Activated CD4-positive, alpha-beta T cell treated with anti-CD3 and anti-CD28 coated beads for 36 hours (primary cell): ENCODE measurements at regions of chr3 and their contacts with region 1.

Region 1: DNA sequence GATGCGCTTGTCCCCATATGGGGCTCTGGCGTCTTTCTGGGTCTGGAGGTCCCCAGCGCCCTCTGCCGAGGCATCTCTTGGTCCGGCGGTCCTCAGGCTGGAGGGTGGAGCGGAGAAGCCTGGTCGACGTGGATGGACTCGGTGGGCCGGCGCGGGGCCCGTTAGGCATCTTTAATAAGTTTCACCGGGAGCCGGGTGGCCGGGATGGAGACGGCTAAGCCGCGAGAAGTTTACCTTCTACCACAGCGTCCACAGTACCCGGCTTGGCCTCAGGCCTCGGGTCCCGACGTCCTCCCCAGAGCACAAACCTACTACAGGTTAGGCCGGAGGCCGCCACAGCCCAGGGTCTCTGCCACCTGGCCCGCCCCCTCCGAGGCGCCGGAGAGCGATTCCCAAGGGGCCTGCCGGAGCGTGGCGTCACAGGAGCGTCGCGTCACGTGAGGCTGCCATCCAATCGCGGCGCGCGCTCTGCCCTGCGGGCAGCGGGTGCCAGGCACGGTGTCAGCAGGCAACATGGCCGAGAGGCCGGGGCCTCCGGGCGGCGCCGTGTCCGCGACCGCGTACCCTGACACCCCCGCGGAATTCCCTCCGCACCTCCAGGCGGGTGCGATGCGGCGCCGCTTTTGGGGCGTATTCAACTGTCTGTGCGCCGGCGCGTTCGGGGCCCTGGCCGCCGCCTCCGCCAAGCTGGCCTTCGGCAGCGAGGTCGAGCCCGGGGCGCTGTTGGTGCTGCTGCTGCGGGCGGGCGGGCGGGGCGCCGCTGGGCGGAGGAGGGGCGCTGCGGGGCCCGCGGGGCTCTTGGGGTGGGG is at the start of gene TMEM42:
- DNase-seq: peak; percentile 91
- ATAC-seq: peak; percentile 96
- H3K4me3 Mint-ChIP-seq: peak within 1 kb of the TSS; percentile 78
- H3K27ac Mint-ChIP-seq: peak within 1 kb of the TSS; percentile 73
- H3K4me1 Mint-ChIP-seq: peaks cover 34% of the 10 kb centered on the region
- H3K27me3 Mint-ChIP-seq: no peaks in the 10 kb centered on the region
- total RNA-seq, gene TMEM42: 7.6 to 10.9 TPM

Region 2: DNA sequence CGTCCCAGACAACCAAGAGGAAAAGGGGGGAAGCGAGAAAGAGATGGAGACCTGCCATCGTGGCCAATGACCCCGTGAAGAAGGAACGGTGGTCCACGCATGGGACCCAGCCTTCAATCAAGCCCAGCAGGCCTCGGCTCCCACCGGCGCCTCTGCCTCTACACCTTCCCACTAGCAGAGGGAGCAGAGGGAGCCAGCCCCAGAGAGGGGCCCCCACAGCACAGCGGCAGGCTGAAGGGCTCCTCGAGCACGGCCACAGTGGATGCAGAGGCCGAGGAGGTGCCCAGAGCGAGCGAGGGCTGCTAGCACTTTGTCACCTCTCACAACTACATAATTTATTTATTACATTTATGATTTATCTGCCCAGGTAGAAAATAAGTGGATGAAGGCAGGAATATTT is 688.4 kb before region 1 on chr3:
- CTCF ChIA-PET with region 1: no interaction called
- POLR2A ChIA-PET with region 1: no interaction called
- intact Hi-C with region 1: no loop called
- DNase-seq: no peak
- ATAC-seq: no peak
- H3K4me3 Mint-ChIP-seq: no peak overlapping the region
- H3K27ac Mint-ChIP-seq: no peak overlapping the region
- H3K4me1 Mint-ChIP-seq: no peaks in the 10 kb centered on the region
- H3K27me3 Mint-ChIP-seq: peaks cover 26% of the 10 kb centered on the region

Region 3: DNA sequence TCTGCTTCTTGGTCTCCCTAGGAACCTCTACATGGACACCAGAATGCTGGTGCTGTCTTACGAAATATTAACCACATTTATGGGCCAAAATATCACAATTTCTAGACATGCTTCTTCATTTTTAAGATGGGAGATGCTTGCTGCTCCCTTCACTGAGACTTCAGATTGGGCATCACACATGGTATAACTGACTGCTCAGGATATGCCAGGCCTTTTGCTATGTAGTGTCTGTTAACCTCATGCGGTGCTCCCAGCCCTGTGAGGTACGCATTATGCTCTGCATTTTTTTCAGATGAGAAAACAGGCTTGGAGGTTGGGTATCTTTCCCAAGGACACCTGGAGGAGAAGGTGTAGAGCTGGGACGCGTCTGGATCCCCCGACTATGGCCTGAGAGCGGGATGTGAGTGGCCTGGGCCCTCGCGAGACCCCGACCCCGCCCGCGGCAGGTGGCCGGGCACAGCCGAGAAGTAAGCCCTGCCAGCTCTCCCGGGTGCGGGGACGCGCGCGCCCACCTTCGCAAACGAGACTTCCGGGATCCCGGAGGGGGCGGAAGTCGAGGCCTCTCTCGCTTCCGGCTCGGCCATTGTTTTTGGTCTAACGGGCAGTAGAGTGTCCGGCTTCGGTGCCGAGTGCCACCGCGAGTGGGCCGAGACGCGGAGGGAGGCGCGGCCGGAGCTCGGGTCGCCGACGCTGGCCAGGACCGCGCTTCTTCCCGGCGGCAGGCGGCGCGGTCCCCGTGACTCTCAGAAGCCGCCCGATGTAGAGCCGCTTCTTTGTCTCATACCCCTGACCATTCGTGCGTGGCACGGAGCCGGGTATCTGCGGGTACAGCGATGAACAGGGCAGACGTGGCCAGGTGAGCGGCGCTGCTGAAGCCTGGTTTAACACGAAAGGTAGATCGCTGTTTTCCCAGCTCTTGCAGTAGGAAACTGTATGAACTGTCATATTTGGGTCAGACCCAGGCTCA is 306.7 kb before region 1 on chr3 and contains the start of gene ZKSCAN7:
- CTCF ChIA-PET with region 1: no interaction called
- POLR2A ChIA-PET with region 1: no interaction called
- intact Hi-C with region 1: loop called in 1 of 2 experiments (anchors 1 kb)
- DNase-seq: peak; percentile 68
- ATAC-seq: peak; percentile 65
- H3K4me3 Mint-ChIP-seq: peak within 1 kb of the TSS; percentile 88
- H3K27ac Mint-ChIP-seq: peak within 1 kb of the TSS; percentile 88
- H3K4me1 Mint-ChIP-seq: peaks cover 13% of the 10 kb centered on the region
- H3K27me3 Mint-ChIP-seq: no peaks in the 10 kb centered on the region
- total RNA-seq, gene ZKSCAN7: 2.0 TPM

Region 4: DNA sequence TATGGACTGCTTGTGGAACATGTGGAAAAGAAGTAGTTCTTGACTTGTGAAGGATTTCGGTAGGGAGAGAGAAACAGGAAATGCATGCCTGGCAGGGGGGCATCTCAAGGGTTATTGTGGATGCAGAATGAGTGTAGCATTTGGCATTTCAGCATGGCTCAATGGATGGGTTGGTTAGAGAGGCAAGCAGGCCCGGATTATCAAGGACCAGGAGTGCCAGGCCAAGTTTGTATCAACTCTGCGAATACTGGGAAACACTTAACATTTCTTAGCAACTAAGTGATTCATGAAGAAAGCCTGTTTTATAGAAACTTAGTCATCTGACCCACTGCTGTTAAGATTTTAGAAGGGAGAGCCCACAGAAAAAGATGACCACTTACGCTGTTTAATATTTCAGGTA is 66.4 kb before region 1 on chr3:
- CTCF ChIA-PET with region 1: no interaction called
- POLR2A ChIA-PET with region 1: no interaction called
- intact Hi-C with region 1: no loop called
- DNase-seq: no peak
- ATAC-seq: no peak
- H3K4me3 Mint-ChIP-seq: no peak overlapping the region
- H3K27ac Mint-ChIP-seq: no peak overlapping the region
- H3K4me1 Mint-ChIP-seq: no peaks in the 10 kb centered on the region
- H3K27me3 Mint-ChIP-seq: no peaks in the 10 kb centered on the region

Region 5: GRCh38 chr3:44883999-44884431 is 22.4 kb after region 1 on chr3:
- CTCF ChIA-PET with region 1: interaction called, 3 read pairs
- POLR2A ChIA-PET with region 1: interaction called, 15 read pairs
- intact Hi-C with region 1: no loop called
- DNase-seq: no peak
- ATAC-seq: no peak
- H3K4me3 Mint-ChIP-seq: no peak overlapping the region
- H3K27ac Mint-ChIP-seq: no peak overlapping the region
- H3K4me1 Mint-ChIP-seq: no peaks in the 10 kb centered on the region
- H3K27me3 Mint-ChIP-seq: peaks cover 14% of the 10 kb centered on the region